ENCODE measurements at regions of chr22 and their contacts with region 1.

Region 1: DNA sequence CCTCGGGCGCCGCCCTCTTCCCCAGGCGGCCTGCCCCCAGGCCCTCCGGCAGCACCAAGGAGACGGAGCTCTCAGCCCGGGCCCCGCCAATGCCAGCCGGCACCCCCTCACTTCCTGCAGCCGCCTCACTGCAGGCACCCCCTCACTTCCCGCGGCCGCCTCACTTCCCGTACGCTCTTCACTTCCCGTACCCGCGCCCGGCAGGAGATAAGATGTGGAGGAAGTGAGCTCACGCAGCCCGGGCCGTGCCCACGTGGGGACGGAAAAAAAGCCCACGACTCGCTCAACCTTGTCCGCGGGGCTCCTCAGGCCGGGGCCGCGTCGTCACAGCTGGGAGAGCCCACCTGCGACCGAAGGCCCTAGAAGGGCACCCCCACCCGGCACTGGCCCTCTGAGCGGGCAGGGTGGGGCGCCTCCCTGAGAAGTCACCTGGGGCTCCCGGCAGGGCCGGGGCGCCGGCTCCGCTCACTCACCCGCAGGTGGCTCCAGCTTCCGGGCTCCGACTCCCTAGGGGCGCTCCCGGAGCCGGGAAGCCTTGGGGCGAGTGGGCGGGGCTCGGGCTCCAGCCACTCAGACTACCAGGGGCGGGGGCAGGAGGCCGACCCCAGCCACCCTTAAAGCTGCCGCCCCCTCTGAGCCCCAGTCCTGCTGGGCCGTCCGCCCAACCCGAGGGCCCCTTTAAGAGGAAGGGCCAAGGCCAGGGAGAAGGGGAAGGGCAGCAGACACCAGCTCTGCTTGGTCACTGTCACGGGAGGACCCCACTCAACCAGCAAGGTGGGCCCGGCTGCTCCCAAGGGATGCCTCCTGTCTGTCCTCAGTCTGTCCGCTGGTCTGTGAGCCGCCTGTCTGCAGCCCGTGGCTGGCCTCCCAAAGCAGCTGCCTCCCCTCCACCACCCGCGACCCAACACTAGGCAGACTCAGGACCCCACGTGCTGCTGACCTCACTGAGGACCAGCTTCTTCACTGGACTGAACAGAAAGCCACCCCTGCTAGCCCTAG is 31.4 kb downstream of the PISD start:
- DNase-seq: peak; percentile 95
- ATAC-seq: peak; percentile 79

Region 2: DNA sequence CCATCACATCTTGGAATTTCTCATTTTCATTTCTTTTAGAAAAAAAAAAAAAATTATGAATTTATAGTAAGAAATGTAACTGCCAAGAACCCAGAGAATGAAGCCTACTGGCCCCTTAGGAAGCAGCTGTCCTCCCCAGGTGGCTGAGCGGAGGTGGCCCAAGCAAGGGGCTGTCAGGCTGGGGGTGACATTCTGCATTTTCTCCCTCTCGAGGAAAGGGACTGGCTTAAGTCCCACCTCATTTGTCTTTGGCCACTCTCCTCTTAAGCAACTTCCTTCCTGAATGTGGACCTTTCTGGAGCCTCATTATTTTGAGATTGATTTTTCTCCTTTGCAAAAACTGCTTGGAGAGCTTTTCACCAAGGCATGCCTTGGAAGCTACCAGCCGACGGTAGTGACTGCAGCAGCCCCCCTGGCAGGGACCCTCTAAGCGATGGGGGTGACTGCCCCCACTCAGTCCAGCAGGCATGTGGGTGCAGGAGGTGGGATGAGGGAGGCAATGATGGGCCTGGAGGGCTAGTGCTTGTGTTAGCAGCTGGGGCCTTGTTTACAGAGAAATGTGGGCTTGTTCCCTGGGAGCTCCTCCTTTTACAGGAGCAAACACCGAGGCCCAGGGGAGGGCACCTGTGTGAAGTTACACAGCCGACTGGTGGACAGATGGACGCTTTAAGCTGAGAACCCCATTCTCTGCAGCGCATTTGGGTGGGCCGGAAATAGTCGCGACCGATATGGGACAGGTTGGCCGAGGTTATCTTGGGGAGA is 773.7 kb before region 1 on chr22:
- intact Hi-C with region 1: no loop called
- DNase-seq: no peak
- ATAC-seq: no peak

Region 3: GRCh38 chr22:31561238-31561887 is 69.3 kb before region 1 on chr22:
- intact Hi-C with region 1: loop called (anchors 1 kb)
- DNase-seq: peak; percentile 77
- ATAC-seq: peak; percentile 85

Region 4: DNA sequence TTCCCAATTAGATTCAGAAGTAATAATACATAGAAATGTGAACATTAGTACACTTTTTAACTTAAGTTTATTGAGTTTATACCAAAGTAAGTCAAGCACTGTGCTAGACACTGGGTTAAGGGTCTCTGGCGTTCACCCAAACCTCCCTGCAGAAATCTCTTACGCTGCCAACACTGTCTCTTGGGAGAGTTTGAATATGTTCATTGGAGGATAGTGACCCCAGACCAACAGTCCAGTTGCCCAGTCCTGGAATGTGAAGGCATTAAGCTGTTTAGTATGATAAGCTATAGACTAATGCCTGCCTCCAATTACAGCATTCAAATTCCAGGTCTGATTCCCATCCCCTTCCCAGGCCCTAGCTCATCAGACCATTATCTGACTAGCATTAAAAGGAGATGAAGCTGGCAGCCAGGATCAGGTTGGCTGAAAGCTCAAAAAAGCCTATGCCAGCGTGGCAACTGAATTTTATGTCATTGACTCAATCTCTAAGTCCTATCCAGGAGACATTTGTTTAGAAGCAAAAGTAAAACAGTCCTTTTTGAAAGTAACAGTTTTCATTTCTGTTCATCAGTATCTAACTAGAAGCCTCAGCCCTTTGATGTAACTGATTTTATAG is 56.5 kb before region 1 on chr22:
- intact Hi-C with region 1: no loop called
- DNase-seq: no peak
- ATAC-seq: no peak

Region 5: GRCh38 chr22:31602259-31602952 is 28.2 kb before region 1 on chr22:
- intact Hi-C with region 1: no loop called
- DNase-seq: no peak
- ATAC-seq: peak; percentile 77

Measured in Right ventricle myocardium inferior (tissue), 1 donor.